PC-3 (cell line): ENCODE measurements at regions of chrX and their contacts with region 1.

Region 1: DNA sequence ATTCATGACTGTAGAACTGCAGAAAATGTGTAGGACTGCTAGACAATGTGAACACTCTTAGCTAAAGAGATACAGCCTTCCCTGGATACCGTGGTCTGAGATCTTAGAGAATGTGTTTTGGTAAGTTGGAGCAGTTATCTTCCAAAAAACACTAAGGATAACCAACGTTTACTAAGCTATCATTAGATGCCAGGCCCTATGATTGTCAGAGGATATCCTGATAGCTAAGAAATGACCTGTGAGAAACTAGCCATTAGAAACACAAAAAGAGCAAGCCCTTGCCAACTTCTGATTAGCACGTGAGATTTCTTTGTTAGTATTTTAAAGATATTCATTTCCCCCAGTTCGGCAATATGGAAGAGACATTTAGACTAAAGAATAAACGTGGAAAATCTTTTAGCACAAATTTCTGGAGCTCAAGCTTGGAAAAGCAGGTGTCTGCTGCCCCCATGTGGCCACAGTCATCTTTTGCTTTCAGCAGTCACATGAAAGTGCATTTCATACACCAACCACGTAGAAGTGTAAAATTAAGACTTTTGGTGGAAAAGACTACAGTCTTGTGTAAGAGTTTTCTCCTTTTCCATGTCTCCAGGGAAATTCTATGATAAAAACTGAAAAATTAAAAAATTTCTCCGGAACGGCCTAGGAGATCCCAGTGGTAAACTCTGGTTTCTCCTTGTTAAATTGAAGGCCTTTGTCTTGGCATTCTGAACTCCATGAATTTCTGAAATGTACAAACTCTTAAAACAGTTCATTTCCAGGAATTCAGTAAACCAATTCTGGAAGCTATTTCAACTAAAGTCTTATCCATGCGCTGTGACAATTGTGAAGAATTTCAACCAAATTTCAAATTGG is 136.4 kb downstream of the ZNF674 start:
- DNase-seq: peak; percentile 83
- ATAC-seq: peak; percentile 46
- H3K4me3 ChIP-seq: no peak overlapping the region
- H3K27ac ChIP-seq: peak overlapping the region; percentile 24
- H3K4me1 ChIP-seq: peaks cover 7% of the 10 kb centered on the region; the same call in 1 of the 2 replicates
- H3K27me3 ChIP-seq: no peaks in the 10 kb centered on the region
- CTCF ChIP-seq: peak; percentile 94

Region 2: DNA sequence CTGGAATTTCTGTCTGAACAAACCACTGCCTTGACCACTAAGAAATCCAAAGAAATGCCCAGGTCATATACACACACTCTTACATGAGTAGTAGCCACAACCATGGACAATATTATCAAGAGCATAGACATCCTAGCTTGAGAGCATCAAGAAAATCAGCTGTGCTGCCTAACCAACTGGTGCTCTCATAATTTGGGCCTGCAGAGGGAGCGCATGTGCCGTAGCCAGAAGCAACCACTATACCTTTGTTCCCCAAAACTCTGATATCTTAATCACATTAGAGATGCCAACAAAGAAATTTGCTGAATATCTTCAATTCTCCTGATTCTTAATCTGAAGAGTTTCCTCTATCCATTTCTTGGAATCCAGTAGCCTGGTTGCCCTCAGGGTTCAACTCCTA is 27.1 kb before region 1 on chrX:
- CTCF ChIA-PET with region 1: interaction called, 6 read pairs
- POLR2A ChIA-PET with region 1: interaction called, 3 read pairs
- intact Hi-C with region 1: loop called (anchors 1 kb)
- DNase-seq: peak; percentile 46
- ATAC-seq: peak; percentile 81
- H3K4me3 ChIP-seq: no peak overlapping the region
- H3K27ac ChIP-seq: no peak overlapping the region
- H3K4me1 ChIP-seq: 0 out of 2 replicates have a peak, but pooled peaks cover 4% of the 10 kb centered on the region
- H3K27me3 ChIP-seq: no peaks in the 10 kb centered on the region
- CTCF ChIP-seq: peak; percentile 64